HCT116 (cell line): ENCODE measurements at regions of chr20 and their contacts with region 1.

Region 1: DNA sequence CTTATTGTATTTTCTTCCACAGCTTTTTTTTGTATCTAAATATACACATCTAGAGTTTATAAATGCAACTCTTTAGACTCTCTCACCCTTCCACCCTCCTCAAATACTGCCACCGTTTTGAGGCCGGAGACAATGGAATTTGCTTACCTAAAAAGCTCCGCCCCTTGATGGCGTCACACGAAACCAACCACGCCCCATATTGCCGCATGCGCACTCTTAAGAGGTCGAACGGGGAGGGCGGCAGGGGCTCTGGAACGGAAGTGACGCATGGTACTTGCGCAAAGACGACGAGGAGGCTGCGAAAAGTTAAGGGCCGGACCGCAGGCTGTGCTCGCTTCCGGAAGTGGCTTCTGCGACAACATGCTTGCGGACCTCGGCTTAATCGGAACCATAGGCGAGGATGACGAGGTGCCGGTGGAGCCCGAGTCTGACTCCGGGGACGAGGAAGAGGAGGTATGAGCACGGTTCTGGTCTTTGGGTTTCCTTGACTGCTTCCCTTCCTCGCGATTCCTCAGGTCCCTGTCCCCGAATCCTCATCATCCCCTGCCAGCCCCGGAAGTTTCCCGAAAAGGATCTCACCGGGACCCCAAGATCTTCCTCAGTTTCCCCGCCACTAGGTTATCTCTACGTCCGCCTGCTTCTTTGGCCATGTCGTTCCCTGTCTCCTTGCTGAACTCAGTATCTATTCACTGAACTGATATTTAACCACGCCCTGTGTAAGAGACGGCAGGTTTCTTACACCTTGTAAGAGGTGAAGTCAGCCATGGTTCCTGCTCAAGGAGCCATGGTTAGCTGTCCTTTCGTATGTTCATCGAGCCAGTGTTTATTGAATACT is at the start of gene DDX27:
- DNase-seq: peak; percentile 98
- ATAC-seq: peak; percentile 87
- H3K4me3 ChIP-seq: peak within 1 kb of the TSS; percentile 87 to 95
- H3K27ac ChIP-seq: peak within 1 kb of the TSS; percentile 59
- H3K4me1 ChIP-seq: peaks cover 18 to 23% of the 10 kb centered on the region in 2 experiments
- H3K27me3 ChIP-seq: no peaks in the 10 kb centered on the region
- CTCF ChIP-seq: no peak
- POLR2A ChIP-seq: peak; percentile 88
- RAD21 ChIP-seq: no peak
- total RNA-seq, gene DDX27: 32.1 TPM

Region 2: GRCh38 chr20:48635433-48636310 is 583.6 kb before region 1 on chr20:
- CTCF ChIA-PET with region 1: no interaction called
- POLR2A ChIA-PET with region 1: no interaction called
- RAD21 ChIA-PET with region 1: no interaction called
- intact Hi-C with region 1: loop called (anchors 5 kb)
- DNase-seq: peak; percentile 16
- ATAC-seq: peak; percentile 88
- H3K4me3 ChIP-seq: no peak overlapping the region
- H3K27ac ChIP-seq: no peak overlapping the region
- H3K4me1 ChIP-seq: peaks cover 0 to 19% of the 10 kb centered on the region in 2 experiments; a peak in 2 of 4 replicates
- H3K27me3 ChIP-seq: no peaks in the 10 kb centered on the region
- CTCF ChIP-seq: peak; percentile 74 to 95 (median 93)
- POLR2A ChIP-seq: no peak
- RAD21 ChIP-seq: peak; percentile 88

Region 3: DNA sequence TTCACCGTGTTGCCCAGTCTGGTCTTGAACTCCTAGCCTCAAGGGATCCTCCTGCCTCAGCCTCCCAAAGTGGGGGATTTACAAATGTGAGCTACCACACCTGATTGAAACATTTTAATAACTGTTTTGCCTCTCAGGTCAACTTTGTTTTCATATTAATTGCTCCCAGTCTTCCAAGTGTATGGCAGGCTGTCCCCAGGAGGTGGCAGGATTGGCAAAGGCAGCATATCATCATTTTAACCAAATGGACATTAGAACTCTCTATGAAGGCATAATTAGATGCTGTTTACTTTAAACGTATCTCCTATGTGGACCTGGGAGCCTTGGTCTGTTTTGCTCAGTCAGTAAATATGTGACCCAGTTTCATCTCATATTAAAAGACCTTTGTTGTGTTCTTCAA is 232.4 kb before region 1 on chr20:
- CTCF ChIA-PET with region 1: interaction called, 4 read pairs
- POLR2A ChIA-PET with region 1: no interaction called
- RAD21 ChIA-PET with region 1: no interaction called
- intact Hi-C with region 1: loop called (anchors 2 kb)
- DNase-seq: no peak
- ATAC-seq: peak; percentile 74
- H3K4me3 ChIP-seq: no peak overlapping the region
- H3K27ac ChIP-seq: no peak overlapping the region
- H3K4me1 ChIP-seq: peaks cover 0 to 9% of the 10 kb centered on the region in 2 experiments; a peak in 2 of 4 replicates
- H3K27me3 ChIP-seq: no peaks in the 10 kb centered on the region
- CTCF ChIP-seq: peak; percentile 35 to 68 (median 66); a peak in 5 of 6 replicates
- POLR2A ChIP-seq: no peak
- RAD21 ChIP-seq: peak; percentile 68

Region 4: DNA sequence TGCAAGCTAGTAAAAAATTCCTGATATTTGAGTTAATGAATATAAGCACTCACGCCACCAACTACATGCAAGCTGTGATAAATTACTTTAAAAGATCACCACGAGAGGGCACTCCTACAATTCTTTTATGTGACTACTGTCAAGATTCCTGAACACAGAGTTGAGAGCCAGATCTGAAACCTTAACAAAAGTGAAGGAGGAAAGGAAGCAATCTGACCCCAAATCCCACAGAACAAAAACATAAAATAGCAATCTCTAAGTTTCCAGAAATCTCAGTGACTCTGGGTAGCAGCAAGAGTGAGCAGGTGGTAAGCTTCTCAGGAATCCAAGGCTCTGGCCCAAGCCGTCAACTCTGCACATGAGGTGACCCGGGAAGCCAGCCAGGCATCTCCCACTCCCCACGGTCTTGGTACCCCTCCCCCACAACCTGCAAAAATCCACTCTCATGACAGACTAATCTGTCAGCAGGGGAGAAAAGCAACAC is 86.3 kb before region 1 on chr20:
- CTCF ChIA-PET with region 1: interaction called, 57 read pairs
- POLR2A ChIA-PET with region 1: interaction called, 4 read pairs
- RAD21 ChIA-PET with region 1: interaction called in 1 of 2 experiments, 7 read pairs
- intact Hi-C with region 1: loop called (anchors 1 kb)
- DNase-seq: peak; percentile 47
- ATAC-seq: peak; percentile 78
- H3K4me3 ChIP-seq: no peak overlapping the region
- H3K27ac ChIP-seq: no peak overlapping the region
- H3K4me1 ChIP-seq: no peaks in the 10 kb centered on the region
- H3K27me3 ChIP-seq: no peaks in the 10 kb centered on the region
- CTCF ChIP-seq: peak; percentile 41 to 69 (median 66); a peak in 4 of 6 replicates
- POLR2A ChIP-seq: no peak
- RAD21 ChIP-seq: peak; percentile 74

Region 5: GRCh38 chr20:49207076-49207475 is 12.2 kb before region 1 on chr20:
- CTCF ChIA-PET with region 1: interaction called, 16 read pairs
- POLR2A ChIA-PET with region 1: interaction called, 5 read pairs
- RAD21 ChIA-PET with region 1: no interaction called
- intact Hi-C with region 1: no loop called
- DNase-seq: no peak
- ATAC-seq: peak; percentile 90
- H3K4me3 ChIP-seq: no peak overlapping the region
- H3K27ac ChIP-seq: no peak overlapping the region
- H3K4me1 ChIP-seq: no peaks in the 10 kb centered on the region
- H3K27me3 ChIP-seq: no peaks in the 10 kb centered on the region
- CTCF ChIP-seq: peak in 2 of 3 experiments; percentile 41 to 45; a peak in 3 of 6 replicates
- POLR2A ChIP-seq: no peak
- RAD21 ChIP-seq: 0 out of 2 replicates have a peak, but pooled peaks have one; percentile 13